ENCODE measurements at regions of chr5 and their contacts with region 1.

Region 1: GRCh38 chr5:66967826-66968262 is 228.8 kb downstream of the CD180 start:
- DNase-seq: no peak
- H3K27ac ChIP-seq: no peak overlapping the region
- CTCF ChIP-seq: no peak

Region 2: GRCh38 chr5:67095346-67096171 is 127.7 kb after region 1 on chr5:
- CTCF ChIA-PET with region 1: no interaction called
- POLR2A ChIA-PET with region 1: interaction called, 12 read pairs
- DNase-seq: no peak
- H3K27ac ChIP-seq: no peak overlapping the region
- CTCF ChIP-seq: no peak

Measured in RWPE1 (cell line).